CD8-positive, alpha-beta T cell (primary cell): ENCODE measurements at regions of chr1 and their contacts with region 1.

Region 1: DNA sequence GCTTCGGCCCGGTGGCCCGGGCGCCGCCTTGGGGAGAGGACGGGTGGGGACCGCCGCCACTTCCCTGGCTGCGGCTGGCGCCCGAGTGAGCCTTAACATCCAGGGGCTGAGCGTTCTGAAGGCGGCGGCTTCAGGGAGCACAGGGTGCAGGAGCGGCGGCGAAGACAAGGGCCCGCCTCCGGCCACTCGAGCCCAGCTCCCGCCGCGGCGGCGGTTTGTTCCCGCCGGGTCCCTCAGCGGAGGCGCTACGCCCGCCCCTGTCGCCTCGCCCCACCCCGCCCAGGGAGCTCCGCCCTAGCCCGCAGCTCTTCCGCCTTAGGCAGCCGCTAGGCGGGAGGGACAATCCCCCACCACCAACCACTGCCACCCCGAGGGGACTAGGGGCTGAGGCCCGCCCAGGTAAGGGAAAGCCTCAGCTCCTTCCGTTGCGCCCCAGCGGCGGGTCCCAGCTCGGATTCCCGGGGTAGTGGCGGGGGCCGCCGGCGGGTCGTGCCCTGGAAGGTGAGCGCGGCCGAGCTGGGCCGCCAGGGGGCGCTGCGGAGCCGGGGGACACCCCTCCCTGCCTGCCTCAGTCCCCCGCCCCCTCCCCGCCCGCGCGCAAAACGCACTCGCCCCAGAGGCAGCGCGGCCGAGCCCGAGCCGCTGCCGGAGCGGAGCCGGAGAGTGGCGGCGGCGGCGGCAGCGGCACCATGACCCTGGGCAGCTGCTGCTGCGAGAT is at the start of gene FOXD2:
- DNase-seq: peak; percentile 87 to 97 (median 92)
- ATAC-seq: peak; percentile 87
- H3K4me3 ChIP-seq: peak within 1 kb of the TSS; percentile 60 to 79
- H3K4me3 Mint-ChIP-seq: peak within 1 kb of the TSS; percentile 86
- H3K27ac ChIP-seq: peak within 1 kb of the TSS; percentile 25 to 61
- H3K27ac Mint-ChIP-seq: peak within 1 kb of the TSS; percentile 73
- H3K4me1 ChIP-seq: peaks cover 31% of the 10 kb centered on the region
- H3K4me1 Mint-ChIP-seq: peaks cover 35% of the 10 kb centered on the region
- H3K27me3 ChIP-seq: peaks cover 21 to 28% of the 10 kb centered on the region in 2 experiments
- H3K27me3 Mint-ChIP-seq: peaks cover 18% of the 10 kb centered on the region
- CTCF ChIP-seq: peak; percentile 97
- total RNA-seq, gene FOXD2: 0.35 to 0.56 TPM

Region 2: DNA sequence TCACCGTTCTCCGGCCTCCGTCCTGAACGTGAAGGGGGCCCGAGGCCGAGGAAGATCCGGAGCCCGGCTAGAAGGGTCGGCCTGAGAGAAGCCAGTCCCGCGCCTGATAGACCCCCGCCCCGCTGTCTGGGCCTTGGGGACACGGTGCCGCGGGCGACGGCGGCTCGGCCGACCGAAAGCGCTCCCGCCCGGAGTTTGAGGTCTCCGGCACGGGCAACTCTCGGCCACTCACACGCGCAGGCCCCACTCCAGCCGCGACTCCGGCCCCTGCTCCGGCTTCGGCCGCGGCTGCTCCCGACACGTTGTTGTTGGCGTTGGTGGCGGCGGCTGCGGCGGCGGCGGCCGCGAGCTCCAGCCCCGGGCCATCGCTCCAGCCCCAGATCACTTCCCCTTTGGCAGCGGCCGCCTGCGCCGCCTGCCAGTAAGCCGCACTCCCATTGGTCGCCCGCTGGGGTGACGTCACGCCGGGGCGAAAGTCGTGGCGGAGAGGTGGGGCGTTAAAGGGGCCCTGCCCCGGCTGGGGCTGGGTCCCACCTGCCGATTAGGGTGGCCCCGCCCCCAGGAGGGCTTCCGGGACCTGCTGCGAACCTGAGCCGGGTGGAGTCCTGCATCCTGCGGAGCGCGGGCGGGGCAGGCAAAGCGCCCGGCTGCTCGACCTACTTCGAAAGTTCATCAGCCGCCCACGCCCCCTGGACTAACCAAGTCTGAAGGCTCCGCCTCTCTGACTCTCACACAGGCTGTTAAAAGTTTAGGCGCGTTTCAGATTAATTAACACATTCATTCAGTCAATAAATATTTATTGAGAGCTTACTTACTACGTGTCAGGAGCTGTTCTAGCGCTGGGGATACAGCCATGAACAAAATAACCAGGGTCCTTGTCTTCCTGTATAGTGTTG is 718.6 kb before region 1 on chr1 and contains the start of gene EFCAB14:
- CTCF ChIA-PET with region 1: no interaction called
- POLR2A ChIA-PET with region 1: no interaction called
- intact Hi-C with region 1: loop called (anchors 10 kb)
- DNase-seq: peak; percentile 98 to 100 (median 99)
- ATAC-seq: peak; percentile 99
- H3K4me3 ChIP-seq: peak within 1 kb of the TSS; percentile 86 to 90
- H3K4me3 Mint-ChIP-seq: peak within 1 kb of the TSS; percentile 89
- H3K27ac ChIP-seq: peak within 1 kb of the TSS; percentile 77 to 81
- H3K27ac Mint-ChIP-seq: peak within 1 kb of the TSS; percentile 91
- H3K4me1 ChIP-seq: peaks cover 28% of the 10 kb centered on the region
- H3K4me1 Mint-ChIP-seq: peaks cover 39% of the 10 kb centered on the region
- H3K27me3 ChIP-seq: no peaks in the 10 kb centered on the region
- H3K27me3 Mint-ChIP-seq: no peaks in the 10 kb centered on the region
- CTCF ChIP-seq: no peak
- total RNA-seq, gene EFCAB14: 33.1 to 36.9 TPM

Region 3: GRCh38 chr1:47257224-47257623 is 180.4 kb before region 1 on chr1:
- CTCF ChIA-PET with region 1: no interaction called
- POLR2A ChIA-PET with region 1: no interaction called
- intact Hi-C with region 1: no loop called
- DNase-seq: no peak
- ATAC-seq: no peak
- H3K4me3 ChIP-seq: no peak overlapping the region
- H3K4me3 Mint-ChIP-seq: no peak overlapping the region
- H3K27ac ChIP-seq: no peak overlapping the region
- H3K27ac Mint-ChIP-seq: no peak overlapping the region
- H3K4me1 ChIP-seq: no peaks in the 10 kb centered on the region
- H3K4me1 Mint-ChIP-seq: no peaks in the 10 kb centered on the region
- H3K27me3 ChIP-seq: no peaks in the 10 kb centered on the region
- H3K27me3 Mint-ChIP-seq: no peaks in the 10 kb centered on the region
- CTCF ChIP-seq: no peak

Region 4: GRCh38 chr1:47333922-47334764 is 103.5 kb before region 1 on chr1:
- CTCF ChIA-PET with region 1: interaction called, 6 read pairs
- POLR2A ChIA-PET with region 1: interaction called, 6 read pairs
- intact Hi-C with region 1: loop called (anchors 1 kb)
- DNase-seq: peak; percentile 39 to 89 (median 66)
- ATAC-seq: peak; percentile 89
- H3K4me3 ChIP-seq: peak overlapping the region; percentile 78 to 82
- H3K4me3 Mint-ChIP-seq: no peak overlapping the region
- H3K27ac ChIP-seq: peak overlapping the region; percentile 67 to 87
- H3K27ac Mint-ChIP-seq: peak overlapping the region; percentile 91
- H3K4me1 ChIP-seq: peaks cover 20% of the 10 kb centered on the region
- H3K4me1 Mint-ChIP-seq: peaks cover 16% of the 10 kb centered on the region
- H3K27me3 ChIP-seq: no peaks in the 10 kb centered on the region
- H3K27me3 Mint-ChIP-seq: no peaks in the 10 kb centered on the region
- CTCF ChIP-seq: no peak

Region 5: DNA sequence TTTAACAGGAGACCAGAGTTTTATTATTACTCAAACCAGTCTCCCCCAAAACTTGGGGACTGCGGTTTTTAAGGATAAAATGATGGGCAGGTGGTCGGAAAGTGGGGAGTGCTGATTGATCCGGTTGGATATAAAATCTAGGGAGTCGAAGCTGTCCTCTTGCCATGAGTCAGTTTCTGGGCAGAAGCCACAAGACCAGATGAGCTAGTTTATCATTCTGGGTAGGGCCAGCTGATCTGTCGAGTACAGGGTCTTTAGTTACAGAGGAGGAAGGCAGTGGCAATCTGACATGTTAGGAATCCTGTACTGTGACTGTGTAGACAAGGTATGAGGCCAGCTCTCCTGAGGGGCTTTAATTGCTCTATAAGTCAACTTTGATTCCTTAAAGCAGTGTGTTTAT is 44.5 kb before region 1 on chr1:
- CTCF ChIA-PET with region 1: no interaction called
- POLR2A ChIA-PET with region 1: no interaction called
- intact Hi-C with region 1: no loop called
- DNase-seq: no peak
- ATAC-seq: no peak
- H3K4me3 ChIP-seq: no peak overlapping the region
- H3K4me3 Mint-ChIP-seq: no peak overlapping the region
- H3K27ac ChIP-seq: no peak overlapping the region
- H3K27ac Mint-ChIP-seq: no peak overlapping the region
- H3K4me1 ChIP-seq: no peaks in the 10 kb centered on the region
- H3K4me1 Mint-ChIP-seq: no peaks in the 10 kb centered on the region
- H3K27me3 ChIP-seq: no peaks in the 10 kb centered on the region
- H3K27me3 Mint-ChIP-seq: peaks cover 24% of the 10 kb centered on the region
- CTCF ChIP-seq: no peak

Region 6: DNA sequence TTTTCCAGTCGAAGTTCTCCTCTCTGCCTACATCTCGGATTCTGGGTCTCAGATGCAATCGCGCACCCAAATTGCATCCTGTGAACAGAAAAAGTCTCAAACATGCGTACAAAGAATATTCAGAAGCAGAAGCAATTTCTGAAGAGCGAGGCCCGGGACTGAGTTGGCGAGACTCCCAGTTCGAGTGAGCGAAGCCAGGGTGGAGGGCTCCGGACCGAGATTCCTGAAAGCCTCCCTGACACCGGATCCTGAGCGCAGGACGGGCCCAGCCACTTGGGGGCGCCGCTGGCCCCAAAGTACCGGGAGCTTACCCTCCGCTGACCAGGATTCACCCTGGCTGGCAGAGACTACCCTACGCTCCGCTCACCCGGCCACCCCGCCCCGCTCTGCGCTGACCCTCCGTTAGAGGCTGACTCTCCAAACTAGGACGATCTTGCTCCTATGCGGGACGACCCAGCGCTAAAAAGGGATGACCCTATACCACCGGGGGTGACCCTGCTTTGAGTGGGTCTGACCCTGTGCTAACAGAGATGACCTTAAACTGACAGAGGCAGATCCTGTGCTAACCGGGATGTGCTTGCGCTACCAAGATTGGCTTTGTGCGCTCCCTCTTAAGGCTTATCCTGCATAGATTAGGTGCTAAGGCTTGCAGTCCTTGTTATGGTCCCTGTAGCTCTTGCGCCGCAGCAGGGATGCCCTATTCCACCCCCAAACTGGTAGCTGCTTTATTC is 12.4 kb after region 1 on chr1:
- CTCF ChIA-PET with region 1: interaction called, 12 read pairs
- POLR2A ChIA-PET with region 1: interaction called, 3 read pairs
- intact Hi-C with region 1: no loop called
- DNase-seq: no peak
- ATAC-seq: no peak
- H3K4me3 ChIP-seq: no peak overlapping the region
- H3K4me3 Mint-ChIP-seq: no peak overlapping the region
- H3K27ac ChIP-seq: no peak overlapping the region
- H3K27ac Mint-ChIP-seq: no peak overlapping the region
- H3K4me1 ChIP-seq: peaks cover 3% of the 10 kb centered on the region
- H3K4me1 Mint-ChIP-seq: peaks cover 8% of the 10 kb centered on the region
- H3K27me3 ChIP-seq: peaks cover 26 to 57% of the 10 kb centered on the region in 2 experiments
- H3K27me3 Mint-ChIP-seq: peaks cover 79% of the 10 kb centered on the region
- CTCF ChIP-seq: no peak

Region 7: GRCh38 chr1:47547753-47548573 is 110.4 kb after region 1 on chr1:
- CTCF ChIA-PET with region 1: no interaction called
- POLR2A ChIA-PET with region 1: no interaction called
- intact Hi-C with region 1: loop called in 1 of 2 experiments (anchors 5 kb)
- DNase-seq: no peak
- ATAC-seq: no peak
- H3K4me3 ChIP-seq: no peak overlapping the region
- H3K4me3 Mint-ChIP-seq: no peak overlapping the region
- H3K27ac ChIP-seq: no peak overlapping the region
- H3K27ac Mint-ChIP-seq: no peak overlapping the region
- H3K4me1 ChIP-seq: no peaks in the 10 kb centered on the region
- H3K4me1 Mint-ChIP-seq: no peaks in the 10 kb centered on the region
- H3K27me3 ChIP-seq: no peaks in the 10 kb centered on the region
- H3K27me3 Mint-ChIP-seq: peaks cover 15% of the 10 kb centered on the region
- CTCF ChIP-seq: no peak

Region 8: DNA sequence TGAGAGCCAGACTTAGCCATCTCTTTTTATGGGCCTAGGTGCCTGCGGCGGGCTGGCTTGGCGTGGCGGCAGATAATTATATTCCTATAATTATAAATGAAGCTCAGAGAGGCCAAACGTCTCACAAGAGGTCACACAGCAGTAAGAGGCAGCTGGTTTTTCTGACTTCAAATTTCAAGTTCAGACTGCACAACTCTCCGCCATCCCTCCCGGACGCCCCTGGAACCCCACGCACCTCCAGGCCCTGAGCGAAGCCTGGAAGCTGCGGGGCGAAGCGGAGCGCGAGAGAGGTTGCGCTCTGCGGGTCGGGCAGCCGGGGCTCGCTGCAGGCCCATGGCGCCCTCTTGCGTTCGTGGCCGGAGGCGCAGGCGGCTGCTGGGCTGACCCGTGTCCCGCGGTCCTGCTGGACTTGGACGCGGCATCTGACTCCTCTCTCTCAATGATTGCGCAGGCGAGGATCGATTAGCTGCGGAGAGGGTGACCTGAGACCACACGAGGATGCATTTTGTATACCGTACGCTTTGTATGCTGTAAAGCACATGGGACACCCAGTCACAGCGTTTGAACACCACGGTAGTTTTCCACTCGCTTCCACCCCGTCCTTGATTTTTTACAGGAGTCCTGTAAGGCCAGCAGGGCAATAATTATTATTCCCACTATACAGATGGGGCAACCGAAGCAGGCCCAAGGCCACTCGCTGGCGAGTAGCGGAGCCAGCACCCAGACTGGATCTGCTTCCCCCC is 272.9 kb after region 1 on chr1:
- CTCF ChIA-PET with region 1: interaction called, 50 read pairs
- POLR2A ChIA-PET with region 1: no interaction called
- intact Hi-C with region 1: loop called (anchors 1 to 2 kb)
- DNase-seq: peak; percentile 35 to 78 (median 62)
- ATAC-seq: peak; percentile 71
- H3K4me3 ChIP-seq: peak overlapping the region in 1 of 2 experiments; percentile 33
- H3K4me3 Mint-ChIP-seq: peak overlapping the region; percentile 32
- H3K27ac ChIP-seq: no peak overlapping the region
- H3K27ac Mint-ChIP-seq: no peak overlapping the region
- H3K4me1 ChIP-seq: peaks cover 21% of the 10 kb centered on the region
- H3K4me1 Mint-ChIP-seq: peaks cover 11% of the 10 kb centered on the region
- H3K27me3 ChIP-seq: peaks cover 16 to 42% of the 10 kb centered on the region in 2 experiments
- H3K27me3 Mint-ChIP-seq: peaks cover 67% of the 10 kb centered on the region
- CTCF ChIP-seq: peak; percentile 84

Region 9: GRCh38 chr1:48776393-48777218 is 1339.0 kb after region 1 on chr1 and contains the start of gene BEND5:
- CTCF ChIA-PET with region 1: no interaction called
- POLR2A ChIA-PET with region 1: no interaction called
- intact Hi-C with region 1: loop called in 1 of 2 experiments (anchors 5 kb)
- DNase-seq: peak; percentile 24 to 86 (median 72)
- ATAC-seq: peak; percentile 90
- H3K4me3 ChIP-seq: peak within 1 kb of the TSS; percentile 57 to 89
- H3K4me3 Mint-ChIP-seq: peak within 1 kb of the TSS; percentile 92
- H3K27ac ChIP-seq: peak within 1 kb of the TSS; percentile 39 to 47
- H3K27ac Mint-ChIP-seq: peak within 1 kb of the TSS; percentile 94
- H3K4me1 ChIP-seq: peaks cover 16% of the 10 kb centered on the region
- H3K4me1 Mint-ChIP-seq: peaks cover 53% of the 10 kb centered on the region
- H3K27me3 ChIP-seq: no peaks in the 10 kb centered on the region
- H3K27me3 Mint-ChIP-seq: peaks cover 6% of the 10 kb centered on the region
- CTCF ChIP-seq: no peak
- total RNA-seq, gene BEND5: 9.4 to 13.1 TPM